ENCODE measurements at regions of chr3 and their contacts with region 1.

Region 1: GRCh38 chr3:25782938-25783660 is at the start of gene NGLY1:
- DNase-seq: peak; percentile 78
- ATAC-seq: peak; percentile 79
- H3K4me3 Mint-ChIP-seq: peak within 1 kb of the TSS; percentile 87
- H3K27ac Mint-ChIP-seq: peak within 1 kb of the TSS; percentile 97
- H3K4me1 Mint-ChIP-seq: peaks cover 48% of the 10 kb centered on the region
- H3K27me3 Mint-ChIP-seq: no peaks in the 10 kb centered on the region
- CTCF ChIP-seq: no peak
- total RNA-seq, gene NGLY1: 104 and 127 TPM in 2 replicates

Region 2: GRCh38 chr3:23945903-23946751 is 1837.0 kb before region 1 on chr3:
- CTCF ChIA-PET with region 1: no interaction called
- POLR2A ChIA-PET with region 1: no interaction called
- intact Hi-C with region 1: loop called (anchors 1 kb)
- DNase-seq: peak; percentile 97
- ATAC-seq: peak; percentile 79
- H3K4me3 Mint-ChIP-seq: peak overlapping the region; percentile 86
- H3K27ac Mint-ChIP-seq: peak overlapping the region; percentile 94
- H3K4me1 Mint-ChIP-seq: peaks cover 44% of the 10 kb centered on the region
- H3K27me3 Mint-ChIP-seq: no peaks in the 10 kb centered on the region
- CTCF ChIP-seq: no peak

Region 3: GRCh38 chr3:24802614-24803013 is 980.5 kb before region 1 on chr3:
- CTCF ChIA-PET with region 1: no interaction called
- POLR2A ChIA-PET with region 1: no interaction called
- intact Hi-C with region 1: no loop called
- DNase-seq: no peak
- ATAC-seq: no peak
- H3K4me3 Mint-ChIP-seq: no peak overlapping the region
- H3K27ac Mint-ChIP-seq: no peak overlapping the region
- H3K4me1 Mint-ChIP-seq: no peaks in the 10 kb centered on the region
- H3K27me3 Mint-ChIP-seq: no peaks in the 10 kb centered on the region
- CTCF ChIP-seq: no peak

Region 4: GRCh38 chr3:25856902-25857518 is 73.9 kb after region 1 on chr3:
- CTCF ChIA-PET with region 1: interaction called, 10 read pairs
- POLR2A ChIA-PET with region 1: no interaction called
- intact Hi-C with region 1: loop called (anchors 1 kb)
- DNase-seq: no peak
- ATAC-seq: peak; percentile 71
- H3K4me3 Mint-ChIP-seq: no peak overlapping the region
- H3K27ac Mint-ChIP-seq: no peak overlapping the region
- H3K4me1 Mint-ChIP-seq: no peaks in the 10 kb centered on the region
- H3K27me3 Mint-ChIP-seq: no peaks in the 10 kb centered on the region
- CTCF ChIP-seq: peak; percentile 92